ENCODE measurements at regions of chr2 and their contacts with region 1.

Region 1: DNA sequence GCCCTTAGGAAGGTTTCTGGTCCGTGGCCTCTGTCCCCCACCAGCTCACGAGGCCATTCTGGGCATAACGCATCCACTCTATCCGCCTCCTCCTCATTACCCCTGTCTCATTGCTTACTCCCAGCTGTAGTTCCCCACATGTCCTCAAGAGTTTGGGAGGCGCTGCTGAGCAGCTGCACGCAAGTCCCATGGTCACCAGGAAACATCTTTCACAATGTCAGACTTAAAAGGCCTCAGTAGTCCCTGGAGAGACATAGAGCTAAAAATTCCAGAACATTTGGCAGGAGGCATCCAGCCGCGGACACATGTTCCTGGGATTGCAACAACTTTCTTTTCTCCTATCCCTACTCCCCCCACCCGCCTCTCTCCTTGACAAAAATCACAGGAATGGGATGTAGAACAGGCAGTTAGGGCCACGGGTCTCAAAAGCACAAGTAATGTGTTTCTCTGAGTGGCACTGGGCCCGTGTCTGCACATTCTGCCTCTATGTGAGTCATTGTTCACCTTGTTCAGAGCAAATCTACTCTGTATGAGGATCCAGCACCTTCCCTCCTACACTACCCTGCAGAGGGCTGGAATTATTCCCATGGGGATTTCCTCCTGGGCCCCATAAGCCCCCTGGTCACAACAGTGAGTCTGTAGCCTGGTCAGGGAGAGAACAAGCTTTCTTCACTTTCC is 8.1 kb downstream of the LBH start:
- H3K4me3 ChIP-seq: no peak overlapping the region
- H3K27ac ChIP-seq: no peak overlapping the region
- H3K4me1 ChIP-seq: no peaks in the 10 kb centered on the region
- CTCF ChIP-seq: peak; percentile 51; the same call in 1 of the 2 replicates

Region 2: DNA sequence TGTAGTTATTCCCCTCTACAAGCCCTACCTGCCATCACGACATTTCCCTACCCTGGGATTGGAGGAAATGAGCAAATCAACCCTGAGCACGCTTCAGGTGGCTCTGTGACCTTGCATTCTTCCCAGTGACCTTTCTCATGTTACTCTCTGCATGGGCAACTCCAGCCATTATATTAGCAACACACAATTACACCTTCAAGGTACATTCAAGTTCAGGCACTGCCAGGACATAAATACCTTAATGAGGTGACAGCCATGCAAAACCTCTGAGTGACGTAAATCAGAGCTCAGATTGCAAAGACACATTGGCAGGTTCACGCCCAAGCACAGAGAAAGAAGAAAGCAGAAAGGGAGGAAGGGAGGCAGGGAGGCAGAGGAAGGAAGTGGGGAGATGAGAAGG is 249.3 kb before region 1 on chr2:
- CTCF ChIA-PET with region 1: no interaction called
- POLR2A ChIA-PET with region 1: no interaction called
- H3K4me3 ChIP-seq: no peak overlapping the region
- H3K27ac ChIP-seq: no peak overlapping the region
- H3K4me1 ChIP-seq: no peaks in the 10 kb centered on the region
- CTCF ChIP-seq: no peak

Region 3: DNA sequence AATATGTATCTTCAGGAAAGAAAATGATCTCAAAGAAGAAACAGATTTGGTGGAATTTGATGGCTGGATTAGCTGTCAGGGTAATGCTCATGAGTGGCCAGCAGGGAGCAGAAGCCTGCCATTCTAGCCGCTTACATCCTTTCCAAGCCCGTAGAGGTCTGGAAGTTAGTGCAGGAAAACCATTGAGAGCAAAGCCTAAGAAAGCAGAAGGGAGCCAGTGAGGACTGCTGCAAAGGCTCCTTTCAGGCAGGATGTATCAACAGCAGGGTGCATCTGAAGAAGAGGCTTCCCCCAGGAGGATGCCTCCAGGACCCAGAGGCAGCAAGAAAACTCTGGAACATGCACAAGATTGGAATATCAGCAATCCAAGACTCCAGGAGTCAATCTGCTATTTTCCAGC is 31.0 kb before region 1 on chr2:
- CTCF ChIA-PET with region 1: interaction called, 22 read pairs
- POLR2A ChIA-PET with region 1: interaction called, 11 read pairs
- H3K4me3 ChIP-seq: no peak overlapping the region
- H3K27ac ChIP-seq: no peak overlapping the region
- H3K4me1 ChIP-seq: no peaks in the 10 kb centered on the region
- CTCF ChIP-seq: peak; percentile 55; the same call in 1 of the 2 replicates

Region 4: DNA sequence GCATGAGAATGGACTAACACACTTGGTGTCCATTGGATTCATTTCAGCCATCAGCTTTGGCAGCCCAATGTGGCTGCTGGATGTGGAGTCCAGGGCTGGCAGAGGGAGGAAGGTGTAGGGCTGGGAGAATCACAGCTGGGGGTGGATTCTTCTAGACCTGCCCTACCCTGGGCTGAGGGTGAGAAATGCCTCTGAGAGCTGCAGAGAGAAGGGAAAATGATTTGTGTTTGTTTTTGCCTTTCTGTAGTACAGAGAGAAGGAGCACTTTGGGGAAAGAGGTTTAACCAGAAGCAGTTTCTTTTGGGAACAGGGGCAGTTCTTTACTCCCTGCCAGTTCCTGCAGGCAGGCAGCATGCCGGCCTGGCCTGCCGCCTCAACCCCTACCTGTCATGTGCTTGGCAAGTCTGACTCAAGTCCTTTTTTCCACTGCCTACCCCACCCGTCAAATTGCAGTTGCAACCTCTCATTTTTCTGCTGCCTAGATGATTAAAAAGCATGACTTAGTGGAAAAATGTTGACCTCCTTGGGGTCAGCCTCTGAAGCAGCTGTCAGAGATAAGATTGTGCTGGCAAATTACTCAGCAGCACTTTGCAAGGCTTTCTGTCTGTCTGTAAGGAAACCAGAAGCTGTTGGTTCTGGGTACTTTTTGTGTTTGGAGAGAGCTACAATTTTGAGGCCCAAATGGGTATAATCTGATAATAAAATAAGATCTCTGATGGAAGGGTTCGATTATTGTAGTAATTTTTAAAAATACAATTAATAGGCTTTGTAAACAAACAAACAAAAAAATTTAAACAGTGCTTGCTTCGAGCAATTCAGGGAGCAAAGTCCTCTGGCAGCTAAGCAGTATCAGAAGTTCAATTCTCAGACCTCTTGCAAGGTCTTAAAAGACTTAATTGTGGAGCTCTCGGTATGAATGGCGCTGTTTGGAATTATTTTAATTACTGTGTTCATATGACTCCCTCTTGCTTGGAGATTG is 13.6 kb after region 1 on chr2:
- CTCF ChIA-PET with region 1: interaction called, 13 read pairs
- POLR2A ChIA-PET with region 1: interaction called, 3 read pairs
- H3K4me3 ChIP-seq: no peak overlapping the region
- H3K27ac ChIP-seq: no peak overlapping the region
- H3K4me1 ChIP-seq: peaks cover 6% of the 10 kb centered on the region; the same call in 1 of the 2 replicates
- CTCF ChIP-seq: no peak

Region 5: GRCh38 chr2:30273261-30273861 is 33.9 kb after region 1 on chr2:
- CTCF ChIA-PET with region 1: interaction called, 13 read pairs
- POLR2A ChIA-PET with region 1: interaction called, 3 read pairs
- H3K4me3 ChIP-seq: no peak overlapping the region
- H3K27ac ChIP-seq: no peak overlapping the region
- H3K4me1 ChIP-seq: peaks cover 8% of the 10 kb centered on the region
- CTCF ChIP-seq: no peak

Measured in HEK293 (cell line).